ENCODE measurements at regions of chr7 and their contacts with region 1.

Region 1: DNA sequence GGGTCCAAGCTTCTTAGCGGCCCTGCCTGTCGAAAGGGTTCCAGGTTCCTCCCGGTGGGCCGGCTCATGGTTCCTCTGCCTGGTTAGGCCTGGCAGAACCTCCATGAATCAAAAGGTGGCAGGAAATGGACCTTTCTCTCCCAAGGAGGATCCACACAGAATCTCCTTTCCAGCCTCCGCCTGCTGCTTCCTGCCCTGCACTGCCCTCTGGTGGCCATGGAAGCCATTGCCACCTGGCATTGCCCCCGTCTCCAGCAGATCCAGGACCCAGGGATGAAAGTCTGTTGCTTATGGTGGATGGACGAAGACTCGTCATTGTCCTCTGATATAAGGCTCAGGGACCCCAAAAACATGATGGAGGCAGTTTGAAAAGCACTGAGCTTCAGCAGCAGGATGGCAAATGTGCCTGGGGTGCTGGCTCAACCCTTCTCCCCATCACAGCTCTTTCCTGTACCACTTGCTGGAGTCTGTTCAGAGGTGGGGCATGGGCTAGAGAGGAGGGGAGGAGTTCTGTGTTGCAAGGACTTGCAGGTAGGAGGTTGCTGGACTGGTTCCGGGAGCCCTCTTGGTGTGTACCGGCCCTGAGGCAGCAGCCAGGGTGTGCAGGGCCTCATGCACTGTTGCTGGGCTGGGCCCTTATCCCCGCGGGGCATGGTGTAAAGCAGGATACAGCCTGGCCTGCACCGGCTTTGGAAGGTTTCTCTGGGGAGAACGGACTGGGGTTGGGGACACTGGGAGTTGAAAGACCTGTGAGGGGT is 11.3 kb upstream of the INMT start:
- DNase-seq: peak; percentile 96
- H3K4me3 ChIP-seq: no peak overlapping the region; a peak in 1 of 4 replicates
- H3K27ac ChIP-seq: no peak overlapping the region
- H3K4me1 ChIP-seq: peaks cover 0 to 3% of the 10 kb centered on the region in 2 experiments; a peak in 1 of 4 replicates
- H3K27me3 ChIP-seq: peaks cover 35% of the 10 kb centered on the region; the same call in 1 of the 2 replicates
- CTCF ChIP-seq: peak; percentile 100
- EP300 ChIP-seq: no peak
- RAD21 ChIP-seq: peak; percentile 99

Region 2: GRCh38 chr7:30564243-30564892 is 176.2 kb before region 1 on chr7:
- CTCF ChIA-PET with region 1: interaction called, 44 read pairs
- POLR2A ChIA-PET with region 1: no interaction called
- DNase-seq: peak; percentile 85
- H3K4me3 ChIP-seq: no peak overlapping the region
- H3K27ac ChIP-seq: no peak overlapping the region; a peak in 1 of 4 replicates
- H3K4me1 ChIP-seq: peaks cover 0 to 9% of the 10 kb centered on the region in 2 experiments; a peak in 1 of 4 replicates
- H3K27me3 ChIP-seq: no peaks in the 10 kb centered on the region
- CTCF ChIP-seq: peak; percentile 96
- EP300 ChIP-seq: no peak
- RAD21 ChIP-seq: peak; percentile 99

Region 3: GRCh38 chr7:30625283-30625682 is 115.3 kb before region 1 on chr7:
- CTCF ChIA-PET with region 1: interaction called, 47 read pairs
- POLR2A ChIA-PET with region 1: no interaction called
- DNase-seq: no peak
- H3K4me3 ChIP-seq: no peak overlapping the region
- H3K27ac ChIP-seq: no peak overlapping the region
- H3K4me1 ChIP-seq: no peaks in the 10 kb centered on the region
- H3K27me3 ChIP-seq: no peaks in the 10 kb centered on the region
- CTCF ChIP-seq: no peak
- EP300 ChIP-seq: no peak
- RAD21 ChIP-seq: peak; percentile 51

Region 4: DNA sequence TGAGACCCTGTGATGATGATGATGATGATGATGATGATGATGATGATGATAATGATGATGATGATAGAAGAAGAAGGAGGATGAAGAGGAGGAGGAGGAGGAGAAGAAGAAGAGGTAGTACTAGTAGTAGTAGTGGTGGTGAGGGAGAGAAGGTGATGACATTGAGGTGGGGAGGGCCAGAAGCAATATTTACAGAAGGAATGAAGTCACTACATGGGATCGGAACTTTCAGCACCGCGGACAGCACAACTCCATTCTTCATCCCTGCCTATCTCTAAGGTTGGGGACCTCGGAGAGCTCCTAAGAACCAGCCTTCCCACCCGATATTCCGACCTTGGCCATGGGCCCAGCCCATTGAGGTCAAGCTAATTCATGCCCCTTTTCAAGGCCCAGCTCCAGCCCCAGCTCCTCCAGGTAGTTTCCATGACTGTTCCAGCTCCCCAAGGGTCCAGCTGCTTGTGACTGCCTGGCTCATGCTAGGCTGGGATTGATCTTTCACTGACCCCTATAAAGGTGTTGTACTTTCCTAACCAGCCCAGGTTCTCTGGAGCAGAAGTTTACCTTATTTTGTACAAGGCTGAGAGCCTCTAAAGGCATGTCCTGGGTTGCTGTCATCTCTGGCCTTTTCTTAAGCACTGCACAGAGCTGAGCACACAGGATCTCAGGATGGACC is 68.7 kb before region 1 on chr7:
- CTCF ChIA-PET with region 1: interaction called, 44 read pairs
- POLR2A ChIA-PET with region 1: no interaction called
- DNase-seq: no peak
- H3K4me3 ChIP-seq: no peak overlapping the region
- H3K27ac ChIP-seq: no peak overlapping the region
- H3K4me1 ChIP-seq: peaks cover 0 to 7% of the 10 kb centered on the region in 2 experiments; a peak in 2 of 4 replicates
- H3K27me3 ChIP-seq: peaks cover 10% of the 10 kb centered on the region; the same call in 1 of the 2 replicates
- CTCF ChIP-seq: no peak
- EP300 ChIP-seq: no peak
- RAD21 ChIP-seq: no peak

Region 5: DNA sequence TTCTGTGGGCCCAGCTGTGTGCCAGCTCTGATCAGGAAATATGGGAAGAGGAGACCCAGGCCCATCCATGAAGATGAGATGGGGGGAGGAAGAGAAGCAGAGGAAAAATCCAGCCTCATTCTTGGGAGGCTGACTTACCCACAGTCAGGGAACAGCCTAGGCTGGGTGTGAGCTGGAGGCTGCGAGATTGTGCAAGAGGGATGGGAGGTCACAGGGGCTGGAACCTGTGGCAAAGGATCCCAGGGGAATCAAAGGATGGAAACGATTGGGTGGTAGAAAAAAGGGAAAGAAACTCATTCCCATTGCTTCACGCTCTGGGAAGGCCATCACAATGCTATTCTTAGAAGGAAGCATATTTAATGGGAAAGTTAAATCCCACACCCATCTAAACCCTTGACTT is 31.6 kb before region 1 on chr7:
- CTCF ChIA-PET with region 1: interaction called, 19 read pairs
- POLR2A ChIA-PET with region 1: no interaction called
- DNase-seq: no peak
- H3K4me3 ChIP-seq: no peak overlapping the region
- H3K27ac ChIP-seq: no peak overlapping the region
- H3K4me1 ChIP-seq: peaks cover 0 to 9% of the 10 kb centered on the region in 2 experiments; a peak in 1 of 4 replicates
- H3K27me3 ChIP-seq: peaks cover 9% of the 10 kb centered on the region
- CTCF ChIP-seq: no peak
- EP300 ChIP-seq: no peak
- RAD21 ChIP-seq: no peak

Region 6: GRCh38 chr7:30750683-30751650 is 10.4 kb after region 1 on chr7:
- CTCF ChIA-PET with region 1: interaction called, 64 read pairs
- POLR2A ChIA-PET with region 1: interaction called, 6 read pairs
- DNase-seq: no peak
- H3K4me3 ChIP-seq: no peak overlapping the region
- H3K27ac ChIP-seq: no peak overlapping the region
- H3K4me1 ChIP-seq: peaks cover 0 to 18% of the 10 kb centered on the region in 2 experiments; a peak in 2 of 4 replicates
- H3K27me3 ChIP-seq: peaks cover 26% of the 10 kb centered on the region
- CTCF ChIP-seq: no peak
- EP300 ChIP-seq: no peak
- RAD21 ChIP-seq: no peak

Region 7: GRCh38 chr7:30800785-30801252 is 60.2 kb after region 1 on chr7:
- CTCF ChIA-PET with region 1: interaction called, 12 read pairs
- POLR2A ChIA-PET with region 1: no interaction called
- DNase-seq: peak; percentile 89
- H3K4me3 ChIP-seq: no peak overlapping the region
- H3K27ac ChIP-seq: peak overlapping the region in 1 of 2 experiments; percentile 4; a peak in 2 of 4 replicates
- H3K4me1 ChIP-seq: peaks cover 24 to 51% of the 10 kb centered on the region in 2 experiments
- H3K27me3 ChIP-seq: no peaks in the 10 kb centered on the region
- CTCF ChIP-seq: peak; percentile 96
- EP300 ChIP-seq: no peak
- RAD21 ChIP-seq: peak; percentile 100

Measured in SK-N-SH (cell line).